ENCODE measurements at regions of chr7 and their contacts with region 1.

Region 1: GRCh38 chr7:156219307-156220077 is 407.2 kb upstream of the SHH start:
- DNase-seq: no peak
- ATAC-seq: no peak
- H3K4me3 Mint-ChIP-seq: no peak overlapping the region
- H3K27ac Mint-ChIP-seq: no peak overlapping the region
- H3K4me1 Mint-ChIP-seq: no peaks in the 10 kb centered on the region
- H3K27me3 Mint-ChIP-seq: no peaks in the 10 kb centered on the region
- CTCF ChIP-seq: no peak

Region 2: DNA sequence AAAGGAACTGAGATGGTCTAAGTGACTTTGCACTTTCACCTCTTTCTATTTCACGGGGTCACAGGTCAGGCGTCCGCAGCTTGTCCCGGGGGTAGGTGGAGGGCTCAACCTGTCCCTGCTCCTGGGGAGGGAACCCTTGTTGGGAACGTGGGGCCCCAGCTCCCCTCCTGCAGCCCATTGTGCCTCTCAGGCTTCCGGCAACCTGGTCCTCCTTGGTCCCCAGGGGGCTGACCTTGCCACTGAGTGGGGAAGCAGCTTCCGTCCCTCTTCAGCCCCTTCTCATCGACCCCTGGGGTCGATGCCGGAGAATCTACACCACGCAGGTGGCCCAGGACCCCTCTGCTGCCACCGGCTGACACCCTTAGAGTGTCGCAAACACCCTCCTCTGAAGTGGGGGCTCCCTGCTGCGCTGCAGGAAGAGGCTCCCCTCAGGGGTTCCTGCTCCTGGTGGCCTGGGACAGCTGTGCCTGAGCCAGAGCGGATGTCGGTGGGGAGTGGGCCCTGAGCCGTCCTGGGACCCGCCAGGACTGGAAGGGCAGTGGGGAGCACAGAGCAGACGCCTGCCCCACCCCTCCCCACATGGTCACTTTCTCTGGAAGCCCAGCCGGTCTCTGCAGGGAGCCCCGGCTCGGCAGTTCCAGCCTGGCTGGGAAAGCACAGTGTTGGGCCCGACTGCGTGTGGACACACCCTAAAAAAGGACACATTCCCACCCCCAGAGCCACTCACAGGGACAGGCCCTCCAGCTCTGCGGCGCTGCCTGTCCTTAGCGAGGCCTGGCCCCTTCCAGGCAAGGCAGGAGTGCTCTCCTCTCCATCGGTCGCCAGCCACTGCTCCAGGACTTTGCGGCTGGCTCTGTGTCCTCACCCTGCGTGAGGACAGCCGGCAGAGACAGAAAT is 49.8 kb before region 1 on chr7:
- CTCF ChIA-PET with region 1: no interaction called
- POLR2A ChIA-PET with region 1: no interaction called
- intact Hi-C with region 1: no loop called
- DNase-seq: no peak
- ATAC-seq: no peak
- H3K4me3 Mint-ChIP-seq: no peak overlapping the region
- H3K27ac Mint-ChIP-seq: no peak overlapping the region
- H3K4me1 Mint-ChIP-seq: no peaks in the 10 kb centered on the region
- H3K27me3 Mint-ChIP-seq: no peaks in the 10 kb centered on the region
- CTCF ChIP-seq: no peak

Region 3: DNA sequence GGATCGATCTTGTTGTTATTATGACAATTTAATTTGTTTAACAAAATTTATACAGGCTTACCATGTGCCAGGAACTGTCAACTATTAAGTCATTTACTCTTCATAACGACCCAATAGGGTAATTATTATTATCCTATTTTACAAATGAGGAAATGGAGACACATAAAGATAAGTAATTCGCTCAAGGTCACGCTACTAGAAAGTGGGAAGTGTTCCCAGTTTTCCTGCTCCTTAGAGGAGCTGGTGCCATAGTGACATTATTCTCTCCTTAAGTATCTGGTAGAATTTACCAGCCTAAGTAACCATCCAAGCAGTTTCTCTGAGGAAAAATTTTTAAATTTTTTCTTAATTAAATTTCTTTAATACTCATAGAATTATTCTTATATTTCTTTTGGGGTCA is 60.1 kb after region 1 on chr7:
- CTCF ChIA-PET with region 1: no interaction called
- POLR2A ChIA-PET with region 1: no interaction called
- intact Hi-C with region 1: loop called (anchors 10 kb)
- DNase-seq: no peak
- ATAC-seq: no peak
- H3K4me3 Mint-ChIP-seq: no peak overlapping the region
- H3K27ac Mint-ChIP-seq: no peak overlapping the region
- H3K4me1 Mint-ChIP-seq: no peaks in the 10 kb centered on the region
- H3K27me3 Mint-ChIP-seq: peaks cover 1% of the 10 kb centered on the region
- CTCF ChIP-seq: no peak

Region 4: DNA sequence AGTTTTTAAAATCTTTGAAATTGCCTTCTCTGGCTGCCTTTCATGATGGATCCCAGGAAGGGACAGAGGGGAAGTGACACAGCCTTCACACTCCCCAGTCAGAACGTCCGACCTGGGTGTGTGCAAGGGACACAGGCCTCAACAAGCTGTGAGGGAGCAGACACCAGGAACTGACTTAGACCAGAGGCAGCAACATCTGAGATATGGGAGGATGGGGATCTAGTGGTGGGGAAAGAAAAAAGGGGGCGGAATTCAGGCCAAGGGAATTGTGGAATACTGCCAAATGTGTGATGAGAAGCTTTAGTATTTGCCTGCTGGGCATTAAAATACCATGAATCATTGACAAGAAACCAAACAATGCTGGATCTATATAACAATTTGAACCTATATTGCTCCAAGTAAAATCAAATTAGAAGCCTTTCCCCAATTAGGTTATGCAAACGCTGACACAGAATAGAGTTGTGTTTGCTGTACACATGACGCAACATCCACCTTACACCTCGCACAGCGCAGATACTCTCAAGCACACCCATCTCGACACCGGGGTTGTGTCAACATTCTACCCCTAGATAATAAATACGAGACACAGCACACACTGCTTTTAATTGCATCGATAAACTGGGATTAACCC is 808.2 kb after region 1 on chr7:
- CTCF ChIA-PET with region 1: no interaction called
- POLR2A ChIA-PET with region 1: no interaction called
- intact Hi-C with region 1: no loop called
- DNase-seq: no peak
- ATAC-seq: no peak
- H3K4me3 Mint-ChIP-seq: no peak overlapping the region
- H3K27ac Mint-ChIP-seq: no peak overlapping the region
- H3K4me1 Mint-ChIP-seq: peaks cover 1% of the 10 kb centered on the region
- H3K27me3 Mint-ChIP-seq: peaks cover 59% of the 10 kb centered on the region
- CTCF ChIP-seq: no peak

Measured in activated B cell treated with CpG ODN at 0.5 μM for 24 hours (primary cell).